ENCODE measurements at regions of chr16 and their contacts with region 1.

Region 1: GRCh38 chr16:31265329-31266245 is 5.8 kb downstream of the ITGAM start:
- DNase-seq: peak; percentile 40
- H3K4me3 Mint-ChIP-seq: peak overlapping the region; percentile 51
- H3K27ac Mint-ChIP-seq: peak overlapping the region; percentile 83
- H3K4me1 Mint-ChIP-seq: peaks cover 36% of the 10 kb centered on the region
- H3K27me3 Mint-ChIP-seq: no peaks in the 10 kb centered on the region

Region 2: DNA sequence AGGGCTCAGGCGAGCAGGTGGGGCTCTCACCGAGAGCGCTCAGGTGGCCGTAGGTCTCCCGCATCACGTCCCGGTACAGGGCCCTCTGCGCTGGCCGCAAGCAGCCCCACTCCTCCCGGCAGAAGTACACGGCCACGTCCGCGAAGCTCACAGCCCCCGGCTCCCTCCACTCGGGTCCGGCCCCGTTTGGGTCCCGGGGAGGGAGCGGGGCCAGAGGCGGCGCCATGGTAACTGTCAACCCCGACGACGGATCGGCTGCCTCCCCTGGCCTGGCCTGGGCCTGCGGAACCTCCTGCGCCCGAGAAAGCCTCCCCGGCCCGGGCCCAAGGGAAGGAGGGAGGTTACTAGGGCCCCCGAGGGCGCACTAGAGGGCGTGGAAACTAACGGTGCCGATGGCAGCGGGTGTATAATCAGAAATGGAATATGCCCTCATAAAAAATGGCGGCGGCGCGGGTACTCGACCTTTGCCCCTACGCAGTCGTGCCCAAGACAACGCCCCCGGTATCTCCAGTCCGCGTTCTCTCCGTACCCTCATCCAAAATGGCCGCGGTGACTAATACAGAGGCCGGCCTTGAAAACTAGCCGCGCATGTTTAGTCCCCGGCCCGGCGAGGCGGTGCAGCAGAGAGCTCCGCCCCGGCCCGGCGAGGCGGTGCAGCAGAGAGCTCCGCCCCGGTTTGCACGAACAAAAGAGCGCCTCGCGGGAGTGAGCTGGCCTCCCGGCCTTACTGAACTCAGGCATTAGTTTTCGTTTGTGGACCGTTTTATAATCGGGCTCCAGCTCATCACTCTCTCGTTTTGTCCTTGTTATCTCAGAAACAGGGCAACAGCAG is 707.4 kb before region 1 on chr16 and contains the start of gene ZNF764:
- intact Hi-C with region 1: no loop called
- DNase-seq: peak; percentile 97
- H3K4me3 Mint-ChIP-seq: peak within 1 kb of the TSS; percentile 83
- H3K27ac Mint-ChIP-seq: peak within 1 kb of the TSS; percentile 95
- H3K4me1 Mint-ChIP-seq: peaks cover 35% of the 10 kb centered on the region
- H3K27me3 Mint-ChIP-seq: peaks cover 1% of the 10 kb centered on the region
- total RNA-seq, gene ZNF764: 14.5 and 14.6 TPM in 2 replicates

Region 3: GRCh38 chr16:31286421-31287032 is 20.9 kb after region 1 on chr16:
- intact Hi-C with region 1: loop called (anchors 2 kb)
- DNase-seq: no peak
- H3K4me3 Mint-ChIP-seq: no peak overlapping the region
- H3K27ac Mint-ChIP-seq: no peak overlapping the region
- H3K4me1 Mint-ChIP-seq: peaks cover 25% of the 10 kb centered on the region
- H3K27me3 Mint-ChIP-seq: peaks cover 11% of the 10 kb centered on the region

Region 4: GRCh38 chr16:31354394-31355291 is 89.1 kb after region 1 on chr16 and contains the start of gene ITGAX:
- intact Hi-C with region 1: loop called (anchors 5 kb)
- DNase-seq: peak; percentile 64
- H3K4me3 Mint-ChIP-seq: peak within 1 kb of the TSS; percentile 86
- H3K27ac Mint-ChIP-seq: peak within 1 kb of the TSS; percentile 97
- H3K4me1 Mint-ChIP-seq: peaks cover 62% of the 10 kb centered on the region
- H3K27me3 Mint-ChIP-seq: no peaks in the 10 kb centered on the region
- total RNA-seq, gene ITGAX: 56.2 and 56.9 TPM in 2 replicates

Region 5: DNA sequence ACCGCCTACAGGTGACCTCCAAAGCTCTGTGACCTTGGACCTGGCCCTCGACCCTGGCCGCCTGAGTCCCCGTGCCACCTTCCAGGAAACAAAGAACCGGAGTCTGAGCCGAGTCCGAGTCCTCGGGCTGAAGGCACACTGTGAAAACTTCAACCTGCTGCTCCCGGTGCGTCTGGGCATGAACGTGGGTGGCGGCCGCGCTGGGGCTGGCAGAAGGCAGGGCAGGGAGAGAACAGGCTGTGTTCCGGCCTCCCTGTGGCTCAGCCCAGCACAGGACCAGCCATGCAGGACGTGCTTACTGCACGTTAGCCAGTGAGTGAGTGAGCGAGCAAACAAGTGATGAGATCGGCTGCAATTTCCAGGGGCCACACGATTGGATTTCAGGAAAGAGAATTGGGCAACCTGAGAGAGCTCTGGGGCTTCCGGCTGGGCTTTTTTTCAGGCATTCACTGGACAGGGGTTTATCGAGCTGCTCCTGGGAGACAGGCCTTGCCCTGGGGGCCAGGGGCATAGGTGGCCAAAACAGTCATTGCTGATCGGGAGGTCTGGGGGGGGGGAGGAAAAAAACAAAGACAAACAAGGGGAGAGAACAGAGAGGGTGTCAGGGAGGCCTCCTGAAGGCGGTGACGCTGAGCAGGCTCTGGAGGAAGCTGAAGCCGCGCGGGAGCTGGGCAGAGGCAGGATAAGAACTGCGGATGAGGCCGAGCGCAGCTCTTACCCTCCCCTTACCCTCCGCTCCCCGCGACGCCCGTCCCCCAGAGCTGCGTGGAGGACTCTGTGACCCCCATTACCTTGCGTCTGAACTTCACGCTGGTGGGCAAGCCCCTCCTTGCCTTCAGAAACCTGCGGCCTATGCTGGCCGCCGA is 106.3 kb after region 1 on chr16:
- intact Hi-C with region 1: no loop called
- DNase-seq: no peak
- H3K4me3 Mint-ChIP-seq: no peak overlapping the region
- H3K27ac Mint-ChIP-seq: no peak overlapping the region
- H3K4me1 Mint-ChIP-seq: peaks cover 10% of the 10 kb centered on the region
- H3K27me3 Mint-ChIP-seq: no peaks in the 10 kb centered on the region

Region 6: GRCh38 chr16:31427441-31428278 is 162.1 kb after region 1 on chr16:
- intact Hi-C with region 1: loop called (anchors 10 kb)
- DNase-seq: peak; percentile 58
- H3K4me3 Mint-ChIP-seq: no peak overlapping the region
- H3K27ac Mint-ChIP-seq: no peak overlapping the region
- H3K4me1 Mint-ChIP-seq: peaks cover 32% of the 10 kb centered on the region
- H3K27me3 Mint-ChIP-seq: no peaks in the 10 kb centered on the region

Measured in activated T-helper 2 cell treated with anti-CD3 and anti-CD28 coated beads, Interferon-gamma antibody, Interleukin-2, Interleukin-4, amounts not matched to agents 10 μg/mL and 5 μg/mL and 100 μg/mL, durations not matched to agents 14 hours and 24 hours and 36 hours (primary cell).